ENCODE measurements at regions of chr3 and their contacts with region 1.

Region 1: DNA sequence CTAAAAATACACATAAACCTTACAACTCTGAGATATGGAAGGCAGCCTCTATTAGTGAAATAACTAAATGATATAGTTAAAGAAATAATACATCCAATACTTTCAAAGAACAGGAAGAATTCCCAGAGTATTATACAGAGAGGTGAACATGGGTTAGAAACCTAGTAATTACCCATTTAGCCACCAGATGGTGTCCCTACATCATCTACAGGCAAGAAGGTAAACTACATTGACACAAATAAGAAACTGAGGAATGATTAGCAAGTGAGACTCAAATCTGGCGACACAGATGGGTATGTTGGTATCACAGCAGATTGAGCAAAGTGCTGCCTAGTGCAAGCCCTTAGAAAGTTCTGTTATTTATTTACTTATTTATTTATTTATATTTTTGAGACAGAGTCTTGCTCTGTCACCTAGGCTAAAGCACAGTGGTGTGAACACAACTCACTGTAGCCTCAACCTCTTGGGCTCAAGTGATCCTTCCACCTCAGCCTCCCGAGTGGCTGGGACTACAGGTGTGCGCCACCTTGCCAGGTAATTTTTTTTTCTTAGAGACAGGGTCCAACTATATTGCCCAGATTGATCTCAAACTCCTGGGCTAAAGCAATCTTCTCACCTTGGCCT is 28.2 kb downstream of the NEK4 start:
- DNase-seq: no peak

Region 2: DNA sequence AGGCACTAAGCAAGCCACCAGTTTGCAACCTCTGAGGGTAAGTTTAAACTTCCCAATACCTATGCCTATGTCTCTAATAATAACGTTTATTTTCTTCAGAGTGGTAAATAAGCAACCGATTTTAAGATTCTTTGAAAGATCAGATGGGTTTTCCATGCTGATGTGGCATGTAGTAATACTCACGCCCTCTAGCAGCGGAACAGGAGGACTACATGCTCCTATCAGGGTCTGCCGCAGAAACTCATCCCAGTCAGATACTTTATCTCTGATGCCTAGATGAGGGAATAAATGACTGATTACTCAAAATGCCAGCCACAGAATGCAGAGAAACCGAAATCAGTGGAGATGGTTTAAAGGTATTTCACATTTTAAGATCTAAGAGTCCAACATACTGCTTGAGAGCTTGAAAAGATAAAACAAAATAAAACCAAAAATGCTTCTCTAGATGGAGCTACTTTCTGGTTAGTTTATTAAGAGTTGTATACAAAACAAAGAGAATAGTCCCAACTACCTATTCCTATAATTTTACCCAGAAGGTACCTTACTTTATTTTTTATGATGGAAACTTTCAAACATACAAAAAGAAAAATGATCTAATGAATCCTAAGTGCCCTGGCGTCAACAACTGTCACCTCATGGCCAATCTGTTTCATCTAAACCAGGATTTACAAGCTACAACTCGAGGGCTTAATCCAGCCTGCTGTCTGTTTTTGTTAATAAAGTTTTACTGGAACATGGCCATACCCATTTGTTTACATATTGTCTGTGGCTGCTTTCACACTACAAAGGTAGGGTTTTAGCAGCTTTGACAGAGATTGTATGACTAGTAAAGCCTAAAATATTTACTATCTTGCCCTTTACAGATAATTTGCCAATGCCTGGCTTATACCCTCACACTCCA is 192.3 kb after region 1 on chr3:
- intact Hi-C with region 1: loop called (anchors 10 kb)
- DNase-seq: no peak

Region 3: DNA sequence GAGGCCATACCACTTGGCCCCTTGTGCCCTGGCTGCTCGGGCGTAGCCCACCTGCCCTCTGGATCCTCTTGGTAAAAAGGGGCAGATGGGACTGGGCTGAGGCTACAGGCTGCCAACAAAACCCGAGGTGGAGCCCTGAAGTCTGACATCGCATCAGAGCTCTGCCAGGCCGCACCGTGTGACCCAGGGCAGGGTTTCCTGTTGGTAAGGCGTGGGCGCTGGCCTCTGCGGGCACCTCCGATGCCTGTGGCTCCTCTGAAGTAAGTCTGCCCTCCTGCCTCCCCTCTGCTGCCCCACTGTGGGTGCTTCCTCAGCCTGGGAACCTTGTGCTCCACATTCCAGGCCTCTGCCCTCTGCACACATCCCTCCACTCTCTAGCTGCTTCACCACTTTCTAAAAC is 1094.8 kb after region 1 on chr3:
- intact Hi-C with region 1: no loop called
- DNase-seq: peak; percentile 35

Measured in cardiac septum (tissue), 1 donor.